ENCODE measurements at regions of chr4 and their contacts with region 1.

Region 1: GRCh38 chr4:137124278-137124932 is 407.9 kb downstream of the PCDH18 start:
- DNase-seq: peak; percentile 79
- ATAC-seq: peak; percentile 100
- H3K4me3 ChIP-seq: peak overlapping the region; percentile 44; the same call in 1 of the 2 replicates
- H3K27ac ChIP-seq: no peak overlapping the region
- H3K4me1 ChIP-seq: no peaks in the 10 kb centered on the region
- H3K27me3 ChIP-seq: no peaks in the 10 kb centered on the region
- CTCF ChIP-seq: peak; percentile 79
- POLR2A ChIP-seq: no peak
- RAD21 ChIP-seq: peak; percentile 88

Region 2: GRCh38 chr4:137370206-137370633 is 245.8 kb after region 1 on chr4:
- CTCF ChIA-PET with region 1: no interaction called
- POLR2A ChIA-PET with region 1: no interaction called
- dilution Hi-C with region 1: no loop called
- in situ Hi-C with region 1: no loop called
- intact Hi-C with region 1: loop called (anchors 10 kb)
- DNase-seq: peak; percentile 85
- ATAC-seq: peak; percentile 68
- H3K4me3 ChIP-seq: no peak overlapping the region
- H3K27ac ChIP-seq: no peak overlapping the region
- H3K4me1 ChIP-seq: peaks cover 12% of the 10 kb centered on the region
- H3K27me3 ChIP-seq: no peaks in the 10 kb centered on the region
- CTCF ChIP-seq: no peak
- POLR2A ChIP-seq: no peak
- RAD21 ChIP-seq: no peak

Region 3: GRCh38 chr4:137651128-137651527 is 526.7 kb after region 1 on chr4:
- CTCF ChIA-PET with region 1: no interaction called
- POLR2A ChIA-PET with region 1: no interaction called
- dilution Hi-C with region 1: no loop called
- in situ Hi-C with region 1: no loop called
- intact Hi-C with region 1: loop called (anchors 10 kb)
- DNase-seq: peak; percentile 72
- ATAC-seq: peak; percentile 62; the same call in 1 of the 2 replicates
- H3K4me3 ChIP-seq: no peak overlapping the region
- H3K27ac ChIP-seq: peak overlapping the region; percentile 76
- H3K4me1 ChIP-seq: peaks cover 5% of the 10 kb centered on the region; the same call in 1 of the 2 replicates
- H3K27me3 ChIP-seq: no peaks in the 10 kb centered on the region
- CTCF ChIP-seq: no peak
- POLR2A ChIP-seq: no peak
- RAD21 ChIP-seq: no peak

Region 4: DNA sequence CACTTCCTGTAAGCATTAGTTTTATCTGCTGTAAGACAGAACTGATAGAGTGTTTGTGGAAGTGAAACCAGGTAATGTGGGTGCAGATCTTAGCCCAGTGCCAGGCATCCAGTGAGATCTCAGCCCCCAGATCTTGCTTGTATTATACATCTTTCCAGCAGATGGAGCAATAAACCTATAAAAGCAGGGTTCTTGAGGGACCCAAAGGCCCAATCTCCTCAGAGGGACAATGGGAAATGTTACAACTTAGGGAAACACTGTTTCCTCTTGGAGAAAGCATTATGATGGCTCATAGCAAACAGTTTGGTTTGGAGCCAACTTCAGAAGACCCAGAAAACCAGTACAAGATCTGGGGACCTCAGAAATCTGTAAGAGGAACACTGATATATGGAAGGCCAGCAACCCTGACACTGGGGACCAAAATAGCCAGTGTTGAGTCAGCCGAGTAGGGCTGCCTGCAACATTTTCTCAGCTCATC is 911.4 kb after region 1 on chr4:
- CTCF ChIA-PET with region 1: interaction called, 3 read pairs
- POLR2A ChIA-PET with region 1: no interaction called
- dilution Hi-C with region 1: no loop called
- in situ Hi-C with region 1: no loop called
- intact Hi-C with region 1: loop called (anchors 5 kb)
- DNase-seq: peak; percentile 81
- ATAC-seq: peak; percentile 83
- H3K4me3 ChIP-seq: no peak overlapping the region
- H3K27ac ChIP-seq: peak overlapping the region; percentile 64
- H3K4me1 ChIP-seq: peaks cover 22% of the 10 kb centered on the region
- H3K27me3 ChIP-seq: no peaks in the 10 kb centered on the region
- CTCF ChIP-seq: peak; percentile 81
- POLR2A ChIP-seq: no peak
- RAD21 ChIP-seq: peak; percentile 89

Region 5: DNA sequence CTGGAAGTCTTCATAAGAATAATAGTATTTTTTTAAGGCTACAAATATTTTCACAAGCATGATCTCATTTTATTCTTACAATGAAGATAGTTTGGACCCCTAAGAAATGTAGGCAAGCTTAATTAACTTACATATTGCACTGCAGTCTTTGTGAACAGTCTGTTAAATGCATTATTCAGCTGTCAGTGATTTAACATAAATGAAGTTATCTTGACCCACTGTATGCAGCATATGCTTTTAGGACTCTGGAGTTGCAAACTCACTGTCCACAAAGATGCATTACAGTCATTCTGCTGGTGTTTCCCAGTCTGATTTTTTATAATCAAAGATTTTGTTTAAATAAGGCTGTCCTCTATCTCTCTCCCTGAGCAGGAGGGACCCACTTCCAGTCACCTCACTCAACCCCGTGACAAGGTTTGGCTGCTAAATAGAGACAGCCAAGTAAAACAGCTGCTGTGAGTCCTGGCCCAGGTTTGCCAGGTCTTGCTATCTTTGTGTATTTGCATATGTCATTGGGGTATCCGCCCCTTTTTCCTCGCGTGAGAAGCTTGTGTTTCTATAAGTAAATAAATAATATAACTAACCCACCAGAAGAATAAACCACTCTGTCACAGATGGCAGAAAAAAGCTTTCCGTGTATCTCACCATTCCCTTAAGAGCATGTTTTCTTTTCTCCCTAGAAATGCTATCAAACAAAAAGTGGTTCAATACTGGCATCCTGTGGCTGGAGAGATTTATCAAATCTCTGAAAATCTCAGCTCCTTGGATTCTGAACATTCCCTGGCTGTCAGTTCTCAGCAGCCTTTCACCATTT is 1050.8 kb after region 1 on chr4:
- CTCF ChIA-PET with region 1: no interaction called
- POLR2A ChIA-PET with region 1: no interaction called
- dilution Hi-C with region 1: no loop called
- in situ Hi-C with region 1: no loop called
- intact Hi-C with region 1: loop called (anchors 10 kb)
- DNase-seq: peak; percentile 61
- ATAC-seq: peak; percentile 67
- H3K4me3 ChIP-seq: no peak overlapping the region
- H3K27ac ChIP-seq: peak overlapping the region; percentile 2; the same call in 1 of the 2 replicates
- H3K4me1 ChIP-seq: peaks cover 3% of the 10 kb centered on the region
- H3K27me3 ChIP-seq: no peaks in the 10 kb centered on the region
- CTCF ChIP-seq: peak; percentile 40
- POLR2A ChIP-seq: no peak
- RAD21 ChIP-seq: peak; percentile 36